Calu3 (cell line): ENCODE measurements at regions of chrX and their contacts with region 1.

Region 1: DNA sequence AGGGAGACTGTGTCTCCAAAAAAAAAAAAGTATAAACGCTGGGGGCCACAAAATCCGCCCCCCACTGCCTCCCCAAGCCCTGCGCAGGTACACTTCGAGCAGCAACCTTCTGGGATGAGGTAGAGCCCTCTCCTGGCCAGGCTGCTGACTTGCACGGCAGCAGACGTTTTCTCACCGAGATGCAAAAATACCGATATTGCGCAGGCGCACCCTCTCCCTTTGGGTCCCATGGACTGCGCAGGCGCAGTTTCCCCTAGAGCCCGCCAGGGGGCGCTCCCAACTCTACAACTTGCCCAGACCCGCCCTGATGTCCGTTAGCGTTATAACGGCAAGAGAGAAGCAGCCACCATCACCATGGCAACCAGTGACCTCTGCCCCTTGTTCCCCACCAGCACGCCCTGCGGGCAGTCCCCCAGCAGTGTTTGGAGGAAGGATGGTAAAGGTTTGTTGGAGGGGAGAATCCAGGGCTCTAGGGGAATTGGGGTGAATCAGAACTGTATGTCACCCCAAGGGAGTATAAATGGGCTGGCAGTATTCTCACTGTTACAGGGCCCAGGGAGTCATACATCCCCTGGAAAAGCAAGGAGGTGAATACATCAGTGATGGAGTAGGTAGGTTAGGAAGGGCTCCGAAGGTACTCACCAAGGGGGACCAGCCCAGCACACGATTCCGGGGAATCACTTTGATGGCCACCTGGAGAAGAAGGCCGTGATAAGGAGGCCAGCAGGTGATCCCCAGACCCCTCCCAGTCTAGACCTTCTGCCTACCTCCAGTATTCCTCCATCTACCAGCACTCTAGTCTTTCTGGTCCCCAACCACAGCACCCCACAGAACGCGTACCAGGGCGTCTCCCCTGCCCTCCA is 1.5 kb downstream of the PIM2 start:
- DNase-seq: peak; percentile 87
- H3K4me3 Mint-ChIP-seq: peak overlapping the region; percentile 97
- H3K27ac Mint-ChIP-seq: peak overlapping the region; percentile 90
- H3K4me1 Mint-ChIP-seq: peaks cover 22% of the 10 kb centered on the region
- H3K27me3 Mint-ChIP-seq: no peaks in the 10 kb centered on the region
- CTCF ChIP-seq: peak; percentile 92

Region 2: GRCh38 chrX:48801280-48802088 is 115.9 kb before region 1 on chrX and contains the start of gene HDAC6:
- CTCF ChIA-PET with region 1: no interaction called
- intact Hi-C with region 1: loop called (anchors 10 kb)
- DNase-seq: peak; percentile 97
- H3K4me3 Mint-ChIP-seq: peak within 1 kb of the TSS; percentile 95
- H3K27ac Mint-ChIP-seq: peak within 1 kb of the TSS; percentile 98
- H3K4me1 Mint-ChIP-seq: peaks cover 18% of the 10 kb centered on the region
- H3K27me3 Mint-ChIP-seq: no peaks in the 10 kb centered on the region
- CTCF ChIP-seq: no peak
- total RNA-seq, gene HDAC6: 68.1 and 78.7 TPM in 2 replicates

Region 3: DNA sequence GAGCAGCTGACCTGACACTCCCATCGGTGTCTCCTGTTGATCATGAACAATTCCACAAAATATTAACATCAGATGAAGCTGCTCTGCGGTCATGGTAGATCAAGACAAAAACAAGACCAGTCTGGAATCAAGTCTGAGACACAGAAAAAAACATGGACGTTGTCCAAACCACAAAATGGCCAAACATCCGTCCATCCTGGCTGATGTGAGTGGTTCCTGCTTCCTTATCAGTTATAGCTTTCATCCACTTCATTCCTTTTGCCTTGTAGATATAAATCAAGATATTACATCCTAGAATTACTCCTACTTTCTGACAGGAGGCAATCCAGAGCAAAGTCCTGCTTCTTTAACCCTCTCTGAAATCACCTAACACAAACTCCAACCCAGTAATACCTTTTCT is 53.2 kb before region 1 on chrX:
- CTCF ChIA-PET with region 1: no interaction called
- intact Hi-C with region 1: loop called (anchors 10 kb)
- DNase-seq: peak; percentile 46
- H3K4me3 Mint-ChIP-seq: peak overlapping the region; percentile 21
- H3K27ac Mint-ChIP-seq: peak overlapping the region; percentile 67
- H3K4me1 Mint-ChIP-seq: peaks cover 23% of the 10 kb centered on the region
- H3K27me3 Mint-ChIP-seq: no peaks in the 10 kb centered on the region
- CTCF ChIP-seq: no peak